ENCODE measurements at regions of chr7 and their contacts with region 1.

Region 1: DNA sequence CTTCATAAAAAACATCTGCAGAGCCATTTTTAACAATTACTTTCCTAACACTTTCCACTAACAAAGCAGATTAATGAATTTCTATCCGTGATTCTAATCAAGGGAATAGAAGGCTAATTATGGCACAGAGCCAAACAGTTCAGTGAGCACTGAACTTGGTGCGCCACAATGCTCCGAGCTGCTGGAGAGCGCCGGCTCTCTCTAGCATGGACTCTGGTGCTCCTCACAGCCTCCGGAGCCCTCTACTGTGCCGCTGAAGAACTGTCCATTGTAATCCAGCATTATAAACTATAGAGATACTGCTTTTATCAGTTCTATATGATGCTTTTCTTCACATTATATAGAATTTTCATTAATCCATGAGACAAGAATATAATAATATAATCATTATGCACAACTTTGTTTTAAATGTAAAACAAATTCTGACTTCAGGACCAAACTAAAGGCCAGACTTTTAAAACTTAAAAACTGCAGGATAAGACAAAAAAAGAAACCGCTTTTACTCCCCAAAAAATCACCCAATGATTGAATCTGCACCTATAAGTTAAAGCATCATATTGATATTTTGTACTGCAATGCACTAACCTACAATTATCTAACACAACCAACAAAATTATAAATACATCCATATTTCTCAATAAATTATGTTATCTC is 123.6 kb downstream of the RNF32 start:
- DNase-seq: peak; percentile 73 to 78
- H3K4me3 ChIP-seq: no peak overlapping the region
- H3K4me3 Mint-ChIP-seq: no peak overlapping the region
- H3K27ac Mint-ChIP-seq: no peak overlapping the region
- H3K4me1 ChIP-seq: peaks cover 20% of the 10 kb centered on the region
- H3K4me1 Mint-ChIP-seq: peaks cover 30% of the 10 kb centered on the region
- H3K27me3 ChIP-seq: no peaks in the 10 kb centered on the region
- H3K27me3 Mint-ChIP-seq: no peaks in the 10 kb centered on the region
- CTCF ChIP-seq: peak; percentile 68 to 79

Region 2: GRCh38 chr7:155796381-155797261 is 967.5 kb before region 1 on chr7:
- CTCF ChIA-PET with region 1: no interaction called
- POLR2A ChIA-PET with region 1: no interaction called
- intact Hi-C with region 1: loop called (anchors 1 kb)
- DNase-seq: peak; percentile 65 to 86
- H3K4me3 ChIP-seq: no peak overlapping the region
- H3K4me3 Mint-ChIP-seq: no peak overlapping the region
- H3K27ac Mint-ChIP-seq: no peak overlapping the region
- H3K4me1 ChIP-seq: peaks cover 7% of the 10 kb centered on the region; the same call in 1 of the 2 replicates
- H3K4me1 Mint-ChIP-seq: no peaks in the 10 kb centered on the region
- H3K27me3 ChIP-seq: no peaks in the 10 kb centered on the region
- H3K27me3 Mint-ChIP-seq: no peaks in the 10 kb centered on the region
- CTCF ChIP-seq: peak; percentile 95 to 97

Region 3: GRCh38 chr7:156515911-156516790 is 248.0 kb before region 1 on chr7:
- CTCF ChIA-PET with region 1: no interaction called
- POLR2A ChIA-PET with region 1: no interaction called
- intact Hi-C with region 1: loop called (anchors 2 kb)
- DNase-seq: peak; percentile 55 to 70
- H3K4me3 ChIP-seq: peak overlapping the region; percentile 24
- H3K4me3 Mint-ChIP-seq: peak overlapping the region; percentile 71
- H3K27ac Mint-ChIP-seq: peak overlapping the region; percentile 55
- H3K4me1 ChIP-seq: peaks cover 10% of the 10 kb centered on the region
- H3K4me1 Mint-ChIP-seq: peaks cover 22% of the 10 kb centered on the region
- H3K27me3 ChIP-seq: no peaks in the 10 kb centered on the region
- H3K27me3 Mint-ChIP-seq: no peaks in the 10 kb centered on the region
- CTCF ChIP-seq: peak in 1 of 2 experiments; percentile 44

Region 4: DNA sequence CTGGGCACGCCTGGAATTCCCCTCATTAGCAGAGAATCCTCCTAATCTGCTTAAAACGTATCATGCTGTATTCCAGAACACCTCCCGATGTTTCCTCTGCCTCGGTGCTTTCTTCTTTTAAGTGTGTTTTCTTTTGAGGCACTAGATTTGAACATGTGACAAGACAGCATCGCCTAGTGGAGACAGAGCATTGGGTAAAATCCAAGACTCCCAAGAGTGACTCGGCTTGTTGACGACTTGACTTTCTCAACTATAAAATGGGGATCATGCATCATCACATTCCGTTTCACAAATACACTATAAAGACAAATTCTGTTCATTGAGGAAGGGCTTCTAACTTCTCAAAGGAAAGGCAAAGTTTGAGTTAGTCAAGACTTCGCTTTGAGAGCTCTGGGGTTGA is 229.2 kb before region 1 on chr7:
- CTCF ChIA-PET with region 1: no interaction called
- POLR2A ChIA-PET with region 1: no interaction called
- intact Hi-C with region 1: no loop called
- DNase-seq: no peak
- H3K4me3 ChIP-seq: no peak overlapping the region
- H3K4me3 Mint-ChIP-seq: no peak overlapping the region
- H3K27ac Mint-ChIP-seq: no peak overlapping the region
- H3K4me1 ChIP-seq: peaks cover 14% of the 10 kb centered on the region
- H3K4me1 Mint-ChIP-seq: peaks cover 15% of the 10 kb centered on the region
- H3K27me3 ChIP-seq: no peaks in the 10 kb centered on the region
- H3K27me3 Mint-ChIP-seq: no peaks in the 10 kb centered on the region
- CTCF ChIP-seq: no peak

Region 5: GRCh38 chr7:156650042-156650441 is 114.1 kb before region 1 on chr7:
- CTCF ChIA-PET with region 1: interaction called, 11 read pairs
- POLR2A ChIA-PET with region 1: no interaction called
- intact Hi-C with region 1: loop called (anchors 1 kb)
- DNase-seq: peak; percentile 82 to 87
- H3K4me3 ChIP-seq: no peak overlapping the region
- H3K4me3 Mint-ChIP-seq: no peak overlapping the region
- H3K27ac Mint-ChIP-seq: peak overlapping the region; percentile 12
- H3K4me1 ChIP-seq: peaks cover 15% of the 10 kb centered on the region
- H3K4me1 Mint-ChIP-seq: peaks cover 47% of the 10 kb centered on the region
- H3K27me3 ChIP-seq: no peaks in the 10 kb centered on the region
- H3K27me3 Mint-ChIP-seq: no peaks in the 10 kb centered on the region
- CTCF ChIP-seq: peak; percentile 72 to 83

Region 6: GRCh38 chr7:156816943-156817572 is 52.9 kb after region 1 on chr7:
- CTCF ChIA-PET with region 1: interaction called, 7 read pairs
- POLR2A ChIA-PET with region 1: no interaction called
- intact Hi-C with region 1: loop called (anchors 1 kb)
- DNase-seq: no peak
- H3K4me3 ChIP-seq: no peak overlapping the region
- H3K4me3 Mint-ChIP-seq: no peak overlapping the region
- H3K27ac Mint-ChIP-seq: no peak overlapping the region
- H3K4me1 ChIP-seq: peaks cover 13% of the 10 kb centered on the region
- H3K4me1 Mint-ChIP-seq: peaks cover 12% of the 10 kb centered on the region
- H3K27me3 ChIP-seq: no peaks in the 10 kb centered on the region
- H3K27me3 Mint-ChIP-seq: no peaks in the 10 kb centered on the region
- CTCF ChIP-seq: peak; percentile 41 to 53